Lower leg skin (tissue), 4 donors: ENCODE measurements at regions of chrX and their contacts with region 1.

Region 1: DNA sequence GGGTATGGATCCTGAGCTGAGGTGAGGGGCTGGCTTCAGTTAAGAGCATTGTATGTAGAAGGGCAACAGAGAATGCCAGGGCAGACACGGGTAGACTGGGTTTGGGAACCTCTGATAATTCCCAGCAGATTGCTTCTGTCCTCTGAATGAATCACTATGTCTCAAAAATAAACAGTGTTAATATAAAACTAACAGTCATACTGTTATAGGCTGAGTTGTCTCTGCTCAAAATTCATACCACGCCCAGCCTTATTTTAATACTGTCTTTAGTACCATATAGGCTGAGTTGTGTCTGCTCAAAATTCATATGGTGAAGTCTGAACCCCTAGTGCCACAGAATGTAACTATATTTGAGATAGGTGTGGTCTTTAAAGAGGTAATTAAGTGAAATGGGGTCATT is 10.0 kb downstream of the XAGE2 start:
- DNase-seq: no peak
- H3K4me3 ChIP-seq: no peak overlapping the region
- CTCF ChIP-seq: no peak
- POLR2A ChIP-seq: no peak

Region 2: DNA sequence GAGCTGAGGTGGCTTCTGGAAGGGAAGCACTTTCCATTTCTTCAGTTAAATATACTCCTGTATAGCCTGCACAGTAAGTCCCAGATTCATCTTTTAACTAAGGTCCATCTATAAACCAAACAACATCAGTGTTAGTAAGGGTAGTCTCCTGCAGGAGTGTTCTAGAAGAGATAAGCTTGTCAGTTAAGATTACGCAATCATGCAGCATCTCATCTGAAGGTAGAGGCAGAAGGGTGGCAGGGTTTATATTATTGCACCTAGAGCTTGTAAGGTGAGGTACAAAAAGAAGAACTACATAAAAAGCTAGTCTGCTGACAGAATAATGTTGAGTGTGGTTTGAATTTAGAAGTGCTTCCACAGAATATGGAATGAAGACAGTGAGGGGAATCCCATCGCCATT is 1002.2 kb before region 1 on chrX:
- intact Hi-C with region 1: loop called (anchors 10 kb)
- DNase-seq: no peak
- H3K4me3 ChIP-seq: no peak overlapping the region
- CTCF ChIP-seq: no peak
- POLR2A ChIP-seq: no peak

Region 3: DNA sequence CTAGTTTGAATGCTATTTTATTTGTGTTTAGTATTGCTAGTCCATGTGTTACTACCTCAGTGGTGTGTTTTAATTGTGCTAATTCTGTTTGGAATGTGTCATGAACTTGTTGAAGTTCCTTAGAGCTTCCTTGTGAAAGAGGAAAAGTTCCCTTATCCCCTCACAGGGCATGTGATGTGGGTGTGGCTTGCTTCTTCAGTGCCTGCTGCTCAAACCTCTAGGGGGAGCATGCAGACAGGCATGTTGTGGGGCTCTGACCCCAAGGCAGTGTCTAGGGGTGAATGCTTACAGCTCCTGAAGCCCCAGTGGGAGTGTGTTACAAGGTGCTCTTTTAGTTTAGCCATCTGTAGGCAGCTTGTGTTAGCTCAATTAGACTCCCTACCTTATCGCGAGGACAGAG is 107.7 kb before region 1 on chrX:
- intact Hi-C with region 1: no loop called
- DNase-seq: no peak
- H3K4me3 ChIP-seq: no peak overlapping the region
- CTCF ChIP-seq: no peak
- POLR2A ChIP-seq: no peak